T-cell (primary cell): ENCODE measurements at regions of chr15 and their contacts with region 1.

Region 1: GRCh38 chr15:90931737-90932659 is at the start of gene HDDC3:
- DNase-seq: peak; percentile 73 to 92 (median 84)
- ATAC-seq: peak; percentile 57 to 62 (median 58)
- H3K4me3 ChIP-seq: peak within 1 kb of the TSS; percentile 63 to 100
- H3K4me3 Mint-ChIP-seq: peak within 1 kb of the TSS; percentile 90 to 97 (median 95)
- H3K27ac ChIP-seq: peak within 1 kb of the TSS; percentile 93
- H3K27ac Mint-ChIP-seq: peak within 1 kb of the TSS; percentile 98
- H3K4me1 ChIP-seq: peaks cover 30 to 70% of the 10 kb centered on the region in 2 experiments
- H3K4me1 Mint-ChIP-seq: peaks cover 49 to 57% (median 54%) of the 10 kb centered on the region in 3 donors
- H3K27me3 ChIP-seq: no peaks in the 10 kb centered on the region
- H3K27me3 Mint-ChIP-seq: no peaks in the 10 kb centered on the region
- total RNA-seq, gene HDDC3: 14.4 to 28.6 (median 26.2) TPM

Region 2: GRCh38 chr15:90648137-90649070 is 283.6 kb before region 1 on chr15:
- CTCF ChIA-PET with region 1: interaction called, 3 to 11 read pairs
- POLR2A ChIA-PET with region 1: no interaction called
- DNase-seq: peak in 30 of 35 experiments; percentile 10 to 82 (median 44)
- ATAC-seq: peak; percentile 66 to 77 (median 70)
- H3K4me3 ChIP-seq: no peak overlapping the region
- H3K4me3 Mint-ChIP-seq: peak overlapping the region in 2 of 3 donors; percentile 42 to 68
- H3K27ac ChIP-seq: no peak overlapping the region
- H3K27ac Mint-ChIP-seq: peak overlapping the region in 1 of 2 donors; percentile 45
- H3K4me1 ChIP-seq: peaks cover 6 to 19% of the 10 kb centered on the region in 2 experiments
- H3K4me1 Mint-ChIP-seq: peaks cover 23 to 40% (median 39%) of the 10 kb centered on the region in 3 donors
- H3K27me3 ChIP-seq: peaks cover 0 to 16% of the 10 kb centered on the region in 2 experiments
- H3K27me3 Mint-ChIP-seq: no peaks in the 10 kb centered on the region

Region 3: DNA sequence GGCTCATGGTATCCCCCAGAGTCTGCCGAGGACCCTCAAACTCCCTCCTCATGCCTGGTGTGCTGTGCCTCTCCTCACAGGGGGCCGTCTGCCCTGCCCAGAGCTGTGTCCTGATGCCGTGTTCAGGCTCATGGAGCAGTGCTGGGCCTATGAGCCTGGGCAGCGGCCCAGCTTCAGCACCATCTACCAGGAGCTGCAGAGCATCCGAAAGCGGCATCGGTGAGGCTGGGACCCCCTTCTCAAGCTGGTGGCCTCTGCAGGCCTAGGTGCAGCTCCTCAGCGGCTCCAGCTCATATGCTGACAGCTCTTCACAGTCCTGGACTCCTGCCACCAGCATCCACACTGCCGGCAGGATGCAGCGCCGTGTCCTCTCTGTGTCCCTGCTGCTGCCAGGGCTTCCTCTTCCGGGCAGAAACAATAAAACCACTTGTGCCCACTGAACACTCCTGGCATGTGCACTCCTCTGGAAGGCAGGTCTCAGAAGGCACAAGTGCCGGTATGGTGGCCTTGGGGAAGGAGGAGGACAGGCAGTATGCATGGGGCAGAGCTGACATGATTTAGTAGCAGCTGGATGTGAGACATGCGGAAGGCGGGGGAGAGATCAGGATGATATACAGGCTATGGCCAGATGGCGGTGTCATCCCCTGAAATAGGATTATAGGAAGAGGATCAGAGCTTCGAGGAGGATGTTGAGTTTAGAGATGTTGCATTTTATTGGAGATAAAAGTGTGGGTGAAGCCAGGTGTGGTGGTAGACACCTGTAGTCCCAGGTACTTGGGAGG is 36.5 kb before region 1 on chr15:
- CTCF ChIA-PET with region 1: interaction called, 11 to 78 read pairs
- POLR2A ChIA-PET with region 1: interaction called in 1 of 2 experiments, 3 read pairs
- DNase-seq: no peak
- ATAC-seq: no peak
- H3K4me3 ChIP-seq: no peak overlapping the region
- H3K4me3 Mint-ChIP-seq: no peak overlapping the region
- H3K27ac ChIP-seq: no peak overlapping the region
- H3K27ac Mint-ChIP-seq: no peak overlapping the region
- H3K4me1 ChIP-seq: peaks cover 0 to 2% of the 10 kb centered on the region in 2 experiments
- H3K4me1 Mint-ChIP-seq: no peaks in the 10 kb centered on the region
- H3K27me3 ChIP-seq: peaks cover 0 to 9% of the 10 kb centered on the region in 2 experiments
- H3K27me3 Mint-ChIP-seq: no peaks in the 10 kb centered on the region

Region 4: GRCh38 chr15:90902040-90902839 is 29.8 kb before region 1 on chr15:
- CTCF ChIA-PET with region 1: interaction called, 7 to 78 read pairs
- POLR2A ChIA-PET with region 1: interaction called, 3 to 4 read pairs
- DNase-seq: peak; percentile 31 to 83 (median 56)
- ATAC-seq: peak; percentile 77 to 80 (median 77)
- H3K4me3 ChIP-seq: peak overlapping the region; percentile 78 to 86
- H3K4me3 Mint-ChIP-seq: peak overlapping the region; percentile 82 to 88 (median 82)
- H3K27ac ChIP-seq: peak overlapping the region; percentile 77
- H3K27ac Mint-ChIP-seq: peak overlapping the region; percentile 90
- H3K4me1 ChIP-seq: peaks cover 3 to 19% of the 10 kb centered on the region in 2 experiments
- H3K4me1 Mint-ChIP-seq: peaks cover 24 to 27% (median 27%) of the 10 kb centered on the region in 3 donors
- H3K27me3 ChIP-seq: no peaks in the 10 kb centered on the region
- H3K27me3 Mint-ChIP-seq: no peaks in the 10 kb centered on the region

Region 5: GRCh38 chr15:90954712-90955671 is 23.0 kb after region 1 on chr15 and contains the start of gene RCCD1:
- CTCF ChIA-PET with region 1: interaction called, 11 to 27 read pairs
- POLR2A ChIA-PET with region 1: interaction called in 1 of 2 experiments, 7 read pairs
- DNase-seq: peak; percentile 73 to 96 (median 82)
- ATAC-seq: peak; percentile 96 to 98 (median 97)
- H3K4me3 ChIP-seq: peak within 1 kb of the TSS; percentile 86 to 90
- H3K4me3 Mint-ChIP-seq: peak within 1 kb of the TSS; percentile 77 to 86 (median 85)
- H3K27ac ChIP-seq: peak within 1 kb of the TSS; percentile 93
- H3K27ac Mint-ChIP-seq: peak within 1 kb of the TSS; percentile 81 to 93
- H3K4me1 ChIP-seq: peaks cover 11 to 27% of the 10 kb centered on the region in 2 experiments
- H3K4me1 Mint-ChIP-seq: peaks cover 0 to 20% (median 16%) of the 10 kb centered on the region in 3 donors
- H3K27me3 ChIP-seq: no peaks in the 10 kb centered on the region
- H3K27me3 Mint-ChIP-seq: no peaks in the 10 kb centered on the region
- total RNA-seq, gene RCCD1: 5.7 to 21.2 (median 15.8) TPM

Region 6: GRCh38 chr15:90982135-90982534 is 50.1 kb after region 1 on chr15:
- CTCF ChIA-PET with region 1: no interaction called
- POLR2A ChIA-PET with region 1: no interaction called
- DNase-seq: no peak
- ATAC-seq: no peak
- H3K4me3 ChIP-seq: no peak overlapping the region
- H3K4me3 Mint-ChIP-seq: no peak overlapping the region
- H3K27ac ChIP-seq: no peak overlapping the region
- H3K27ac Mint-ChIP-seq: no peak overlapping the region
- H3K4me1 ChIP-seq: no peaks in the 10 kb centered on the region
- H3K4me1 Mint-ChIP-seq: peaks cover 0 to 11% (median 0%) of the 10 kb centered on the region in 3 donors
- H3K27me3 ChIP-seq: no peaks in the 10 kb centered on the region
- H3K27me3 Mint-ChIP-seq: no peaks in the 10 kb centered on the region

Region 7: DNA sequence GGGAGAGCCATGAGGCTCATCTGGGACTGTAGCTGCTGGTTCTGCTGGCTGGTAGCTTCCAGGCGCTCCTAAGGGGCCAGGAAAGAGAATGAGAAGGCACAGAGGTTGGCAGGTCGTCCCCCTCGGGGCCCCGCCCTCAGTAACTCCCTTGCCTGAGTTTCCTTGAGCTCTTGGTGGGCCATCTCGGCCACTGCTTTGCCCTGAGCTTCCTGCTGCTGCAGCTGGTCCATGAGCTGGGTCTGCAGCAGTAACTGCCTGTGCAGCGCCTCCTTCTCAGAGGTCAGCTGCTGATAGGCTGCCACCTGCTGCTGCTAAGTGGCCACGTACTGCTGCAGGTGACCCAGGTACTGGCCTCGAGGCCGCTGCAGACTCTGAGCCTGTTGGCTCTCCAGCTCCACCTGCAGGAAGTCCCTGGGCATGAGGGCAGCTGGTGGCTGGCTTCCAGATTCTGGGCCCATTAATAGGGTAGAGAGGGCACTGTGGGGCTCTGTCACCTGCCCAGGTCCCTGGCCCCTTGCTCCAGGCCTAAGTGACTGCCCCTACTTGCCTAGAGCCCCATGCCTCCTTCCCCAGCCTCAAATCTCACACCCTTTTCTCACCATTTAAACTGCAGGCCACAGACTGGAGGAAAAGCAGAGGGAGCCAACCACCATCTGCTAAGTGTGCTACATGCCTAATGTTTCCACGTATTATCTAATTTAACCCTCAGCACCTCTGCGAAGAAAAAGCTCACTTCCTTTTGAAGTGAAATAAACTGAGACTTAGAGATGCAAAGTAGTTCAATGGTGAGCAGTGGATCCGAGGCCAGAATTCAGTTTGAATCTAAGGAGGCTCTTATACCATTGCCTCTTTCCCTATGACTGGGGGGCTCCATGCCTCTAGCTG is 101.2 kb after region 1 on chr15:
- CTCF ChIA-PET with region 1: interaction called in 1 of 2 experiments, 10 read pairs
- POLR2A ChIA-PET with region 1: no interaction called
- DNase-seq: peak in 33 of 35 experiments; percentile 11 to 67 (median 39)
- ATAC-seq: peak; percentile 63 to 79 (median 65)
- H3K4me3 ChIP-seq: no peak overlapping the region
- H3K4me3 Mint-ChIP-seq: no peak overlapping the region
- H3K27ac ChIP-seq: no peak overlapping the region
- H3K27ac Mint-ChIP-seq: no peak overlapping the region
- H3K4me1 ChIP-seq: peaks cover 0 to 7% of the 10 kb centered on the region in 2 experiments
- H3K4me1 Mint-ChIP-seq: peaks cover 4 to 10% (median 5%) of the 10 kb centered on the region in 3 donors
- H3K27me3 ChIP-seq: peaks cover 0 to 7% of the 10 kb centered on the region in 2 experiments
- H3K27me3 Mint-ChIP-seq: peaks cover 0 to 4% of the 10 kb centered on the region in 2 donors